Left ventricle myocardium superior (tissue), 1 donor: ENCODE measurements at regions of chr12 and their contacts with region 1.

Region 1: GRCh38 chr12:98644711-98645402 is at the starts of genes APAF1 and IKBIP:
- DNase-seq: peak; percentile 100
- ATAC-seq: peak; percentile 99
- total RNA-seq, gene APAF1: 3.8 TPM
- total RNA-seq, gene IKBIP: 4.0 TPM

Region 2: GRCh38 chr12:98593351-98594049 is 51.4 kb before region 1 on chr12 and contains the start of gene SLC25A3:
- intact Hi-C with region 1: loop called (anchors 10 kb)
- DNase-seq: peak; percentile 98
- ATAC-seq: peak; percentile 99
- total RNA-seq, gene SLC25A3: 1,843 TPM